PC-3 (cell line): ENCODE measurements at regions of chr1 and their contacts with region 1.

Region 1: GRCh38 chr1:164772635-164773034 is 213.7 kb downstream of the PBX1 start:
- DNase-seq: peak; percentile 97
- ATAC-seq: peak; percentile 96
- H3K4me3 ChIP-seq: no peak overlapping the region
- H3K27ac ChIP-seq: peak overlapping the region; percentile 87
- H3K4me1 ChIP-seq: peaks cover 41% of the 10 kb centered on the region
- H3K27me3 ChIP-seq: no peaks in the 10 kb centered on the region
- CTCF ChIP-seq: no peak

Region 2: GRCh38 chr1:164417016-164417704 is 355.5 kb before region 1 on chr1:
- CTCF ChIA-PET with region 1: no interaction called
- POLR2A ChIA-PET with region 1: no interaction called
- intact Hi-C with region 1: no loop called
- DNase-seq: no peak
- ATAC-seq: no peak
- H3K4me3 ChIP-seq: no peak overlapping the region
- H3K27ac ChIP-seq: no peak overlapping the region
- H3K4me1 ChIP-seq: no peaks in the 10 kb centered on the region
- H3K27me3 ChIP-seq: peaks cover 51% of the 10 kb centered on the region
- CTCF ChIP-seq: no peak

Region 3: DNA sequence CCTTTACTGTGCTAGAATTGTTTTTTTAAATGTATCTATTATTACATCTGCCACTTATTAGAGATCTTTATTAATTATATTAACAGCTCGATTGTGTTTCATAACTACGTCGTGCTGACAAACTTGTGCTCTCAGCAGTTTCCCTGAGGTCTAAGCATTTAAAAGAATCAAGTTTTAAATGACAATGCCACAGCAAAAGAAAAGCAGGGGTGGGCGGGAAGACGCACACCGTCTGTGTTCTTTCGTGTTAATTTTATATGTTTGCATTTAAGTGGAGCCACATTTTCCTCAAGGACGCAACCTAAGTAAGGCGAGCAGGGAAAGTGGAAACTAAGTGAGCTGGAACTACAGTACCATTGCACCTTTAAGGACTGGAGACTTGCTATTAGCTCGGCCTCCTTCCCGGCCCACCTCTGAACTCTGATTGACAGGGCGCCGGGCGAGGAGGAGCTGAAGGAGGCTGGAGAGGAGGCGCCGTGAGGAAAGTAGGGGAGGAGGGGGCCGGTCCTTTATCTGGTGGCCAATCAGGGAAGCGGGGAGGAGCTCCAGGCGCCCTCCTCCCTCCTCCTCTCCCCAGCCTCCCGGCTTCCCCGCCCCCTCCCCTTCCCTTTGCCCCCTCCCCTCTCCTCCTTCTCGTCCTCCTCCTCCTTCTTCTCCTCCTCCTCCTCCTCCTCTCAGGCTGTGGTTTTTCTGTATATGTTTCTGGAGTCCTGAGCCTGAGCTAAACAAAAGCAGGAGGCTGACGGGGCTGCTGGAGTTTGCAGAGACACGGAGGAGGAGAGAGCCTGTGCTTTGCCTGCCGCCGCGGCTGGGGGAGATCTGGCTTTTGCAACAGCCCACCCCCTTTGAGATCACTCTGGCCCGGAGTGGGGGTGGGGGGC is 213.9 kb before region 1 on chr1 and contains the start of gene PBX1:
- CTCF ChIA-PET with region 1: no interaction called
- POLR2A ChIA-PET with region 1: no interaction called
- intact Hi-C with region 1: loop called (anchors 1 kb)
- DNase-seq: peak; percentile 98
- ATAC-seq: peak; percentile 98
- H3K4me3 ChIP-seq: peak within 1 kb of the TSS; percentile 71
- H3K27ac ChIP-seq: no peak within 1 kb of the TSS
- H3K4me1 ChIP-seq: peaks cover 10% of the 10 kb centered on the region
- H3K27me3 ChIP-seq: no peaks in the 10 kb centered on the region
- CTCF ChIP-seq: no peak
- total RNA-seq, gene PBX1: 8.4 and 9.8 TPM in 2 replicates

Region 4: DNA sequence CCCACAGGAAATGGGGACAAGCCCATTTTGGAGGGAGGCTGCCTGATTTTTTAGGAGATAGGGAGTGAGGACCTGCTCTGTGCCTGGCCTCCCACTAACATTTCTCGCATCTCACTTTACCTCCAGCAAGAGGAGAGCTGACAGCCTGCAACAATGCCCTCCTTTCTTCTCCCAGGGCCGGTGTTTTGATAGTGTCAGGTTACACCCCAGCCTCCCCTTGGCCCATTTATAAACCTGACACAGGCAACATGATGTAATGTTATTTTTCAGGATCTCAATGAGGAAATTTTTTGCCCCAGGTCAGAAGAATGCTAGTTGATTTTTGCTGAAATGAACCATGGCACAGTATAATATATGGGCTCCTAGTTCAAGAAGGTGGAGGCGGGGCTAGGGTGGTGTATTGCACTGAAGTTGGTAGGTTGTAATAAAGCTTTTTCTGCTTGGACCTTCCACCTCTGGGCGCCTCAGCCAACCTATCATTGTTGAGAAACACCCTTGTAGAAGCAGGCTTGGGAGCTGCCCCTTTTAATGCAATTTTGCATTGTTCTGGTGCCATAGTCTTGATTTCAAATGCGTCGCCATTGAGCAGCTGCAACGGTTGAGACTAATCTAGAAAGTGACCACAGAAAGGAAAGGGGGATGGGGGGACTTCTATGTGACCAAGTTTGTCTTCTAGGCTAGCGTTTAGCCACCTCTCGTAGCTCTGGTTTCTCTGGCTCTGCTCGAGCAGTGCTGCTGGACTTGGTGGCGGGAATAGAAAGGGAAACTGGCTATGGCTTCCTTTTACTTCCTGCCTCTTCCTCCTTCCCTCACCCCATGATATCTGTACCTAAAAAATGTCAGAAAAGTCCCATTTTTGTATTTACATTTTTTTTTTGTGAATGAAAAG is 160.6 kb before region 1 on chr1:
- CTCF ChIA-PET with region 1: no interaction called
- POLR2A ChIA-PET with region 1: no interaction called
- intact Hi-C with region 1: loop called (anchors 5 kb)
- DNase-seq: peak; percentile 93
- ATAC-seq: peak; percentile 94
- H3K4me3 ChIP-seq: peak overlapping the region; percentile 8; the same call in 1 of the 2 replicates
- H3K27ac ChIP-seq: peak overlapping the region; percentile 51
- H3K4me1 ChIP-seq: peaks cover 25% of the 10 kb centered on the region
- H3K27me3 ChIP-seq: no peaks in the 10 kb centered on the region
- CTCF ChIP-seq: no peak

Region 5: DNA sequence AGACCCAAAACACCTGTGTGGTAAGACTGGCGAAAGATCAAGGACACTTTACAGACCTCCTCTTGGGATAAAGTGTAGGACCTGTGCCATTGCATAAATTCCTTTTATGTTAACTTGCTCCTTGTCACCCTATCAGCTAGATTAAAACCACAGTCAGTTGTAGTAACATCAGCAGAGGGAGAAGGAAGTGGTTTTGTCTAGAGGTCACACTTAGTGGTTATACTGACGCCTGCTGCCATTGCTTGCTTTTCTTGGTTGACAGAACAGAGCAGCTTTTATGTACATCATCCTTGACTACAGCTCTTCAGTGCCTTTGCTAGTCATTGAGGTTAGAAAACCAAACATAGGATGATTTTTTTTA is 112.2 kb before region 1 on chr1:
- CTCF ChIA-PET with region 1: no interaction called
- POLR2A ChIA-PET with region 1: no interaction called
- intact Hi-C with region 1: loop called (anchors 1 kb)
- DNase-seq: peak; percentile 70
- ATAC-seq: peak; percentile 70
- H3K4me3 ChIP-seq: peak overlapping the region; percentile 38; the same call in 1 of the 2 replicates
- H3K27ac ChIP-seq: peak overlapping the region; percentile 40
- H3K4me1 ChIP-seq: peaks cover 32% of the 10 kb centered on the region
- H3K27me3 ChIP-seq: no peaks in the 10 kb centered on the region
- CTCF ChIP-seq: no peak

Region 6: DNA sequence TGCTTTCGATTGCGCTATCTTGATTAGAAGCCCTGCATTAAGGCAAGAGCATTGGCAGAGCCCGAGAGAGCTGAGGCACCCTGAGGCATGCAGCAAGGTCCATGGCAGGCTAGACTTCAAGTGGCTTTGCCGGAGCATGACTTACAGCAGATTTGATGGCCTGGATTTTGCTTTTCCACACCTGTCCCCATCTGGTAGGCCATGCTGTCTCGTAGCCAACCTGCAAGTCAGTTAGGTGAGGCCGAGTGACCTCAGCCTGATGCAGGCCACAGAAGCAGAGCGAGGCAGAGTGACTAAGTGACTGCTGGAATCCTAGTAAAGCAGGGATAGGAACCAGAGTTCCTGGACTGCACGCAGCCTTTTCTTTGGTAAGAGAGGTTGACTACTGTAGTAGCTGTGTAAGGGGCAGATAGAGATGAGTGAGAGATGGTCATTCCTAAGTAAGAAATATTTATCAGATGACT is 64.7 kb before region 1 on chr1:
- CTCF ChIA-PET with region 1: no interaction called
- POLR2A ChIA-PET with region 1: no interaction called
- intact Hi-C with region 1: loop called (anchors 1 kb)
- DNase-seq: peak; percentile 97
- ATAC-seq: peak; percentile 79
- H3K4me3 ChIP-seq: peak overlapping the region; percentile 8; the same call in 1 of the 2 replicates
- H3K27ac ChIP-seq: peak overlapping the region; percentile 95
- H3K4me1 ChIP-seq: peaks cover 47% of the 10 kb centered on the region
- H3K27me3 ChIP-seq: no peaks in the 10 kb centered on the region
- CTCF ChIP-seq: no peak

Region 7: DNA sequence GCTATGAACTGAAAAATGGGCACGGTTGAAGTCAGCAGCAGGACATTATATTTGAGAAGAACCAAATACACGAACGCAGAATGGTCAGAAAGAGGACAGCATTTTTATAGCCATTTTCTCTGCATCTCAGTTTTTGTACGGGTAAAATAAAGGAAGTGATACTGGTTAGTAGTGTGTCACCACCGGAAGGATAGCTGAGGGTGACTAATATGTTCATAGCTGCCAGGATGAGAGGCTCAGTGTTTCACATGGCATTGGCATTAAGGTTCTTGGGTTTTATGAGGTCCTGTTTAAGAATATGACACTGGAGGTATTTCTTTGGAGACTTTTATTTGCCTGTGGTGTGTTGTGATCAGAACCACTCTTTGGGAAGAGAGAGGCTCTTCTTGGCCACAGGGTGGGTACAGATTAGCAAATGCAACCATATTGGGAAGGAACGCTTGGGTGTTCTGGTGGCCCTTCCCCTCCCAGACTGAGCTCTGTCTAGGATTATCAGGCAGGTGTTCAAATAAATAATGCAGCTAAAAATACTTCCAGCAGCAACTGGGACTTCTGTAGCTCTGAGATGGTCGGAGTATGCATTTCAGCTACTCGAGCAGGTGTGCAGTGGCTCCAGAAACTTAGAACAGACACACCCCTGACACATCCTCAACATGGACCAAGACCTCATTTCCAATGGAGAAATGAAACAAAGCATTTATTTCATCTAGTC is 55.5 kb before region 1 on chr1:
- CTCF ChIA-PET with region 1: no interaction called
- POLR2A ChIA-PET with region 1: no interaction called
- intact Hi-C with region 1: loop called (anchors 1 kb)
- DNase-seq: peak; percentile 95
- ATAC-seq: peak; percentile 88
- H3K4me3 ChIP-seq: peak overlapping the region; percentile 15; the same call in 1 of the 2 replicates
- H3K27ac ChIP-seq: peak overlapping the region; percentile 90
- H3K4me1 ChIP-seq: peaks cover 42% of the 10 kb centered on the region
- H3K27me3 ChIP-seq: no peaks in the 10 kb centered on the region
- CTCF ChIP-seq: no peak

Region 8: DNA sequence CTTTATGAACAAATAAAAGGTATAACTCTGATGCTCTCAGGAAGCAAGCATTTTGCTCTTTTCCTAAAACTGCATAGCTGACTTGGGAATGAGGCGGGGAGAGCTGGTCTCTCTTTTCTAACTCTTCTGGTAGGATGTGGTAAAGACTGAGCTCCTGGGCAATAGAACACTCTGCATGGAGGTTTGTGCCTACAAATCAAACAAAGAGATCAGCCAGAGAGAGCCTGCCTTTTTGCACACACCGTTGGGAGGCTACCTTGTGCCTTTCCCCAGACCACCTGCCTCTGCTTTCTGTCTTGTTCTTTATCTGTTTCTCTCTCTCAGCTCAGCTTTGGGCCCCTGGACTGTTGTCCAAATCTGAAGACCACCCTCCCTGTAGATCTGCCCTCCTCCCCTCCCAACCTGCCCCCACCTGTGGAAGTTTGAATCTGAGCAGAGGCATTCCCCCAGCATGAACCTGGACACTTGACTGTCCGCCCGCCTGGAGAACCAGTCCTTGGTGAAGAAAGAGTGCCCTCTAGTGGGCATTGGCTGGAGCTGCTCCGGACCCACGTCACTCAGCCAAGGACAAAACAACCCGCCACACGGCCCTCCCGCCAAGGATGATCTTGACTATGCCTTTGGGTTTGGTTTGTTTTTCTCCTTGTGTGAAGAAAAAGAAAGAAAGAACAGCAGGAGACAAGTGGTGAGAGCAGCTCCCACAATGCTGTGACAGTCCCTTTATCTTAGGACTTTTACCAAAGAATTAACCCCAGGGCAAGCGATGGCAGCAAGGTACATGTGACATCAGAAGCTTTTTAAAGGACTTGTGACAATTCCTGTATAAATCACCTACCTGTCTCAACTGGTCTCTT is 14.6 kb after region 1 on chr1:
- CTCF ChIA-PET with region 1: interaction called, 3 read pairs
- POLR2A ChIA-PET with region 1: no interaction called
- intact Hi-C with region 1: loop called (anchors 1 kb)
- DNase-seq: peak; percentile 93
- ATAC-seq: peak; percentile 98
- H3K4me3 ChIP-seq: no peak overlapping the region
- H3K27ac ChIP-seq: no peak overlapping the region
- H3K4me1 ChIP-seq: peaks cover 4% of the 10 kb centered on the region; the same call in 1 of the 2 replicates
- H3K27me3 ChIP-seq: no peaks in the 10 kb centered on the region
- CTCF ChIP-seq: peak; percentile 97